GM18951 (cell line): ENCODE measurements at regions of chr10 and their contacts with region 1.

Region 1: DNA sequence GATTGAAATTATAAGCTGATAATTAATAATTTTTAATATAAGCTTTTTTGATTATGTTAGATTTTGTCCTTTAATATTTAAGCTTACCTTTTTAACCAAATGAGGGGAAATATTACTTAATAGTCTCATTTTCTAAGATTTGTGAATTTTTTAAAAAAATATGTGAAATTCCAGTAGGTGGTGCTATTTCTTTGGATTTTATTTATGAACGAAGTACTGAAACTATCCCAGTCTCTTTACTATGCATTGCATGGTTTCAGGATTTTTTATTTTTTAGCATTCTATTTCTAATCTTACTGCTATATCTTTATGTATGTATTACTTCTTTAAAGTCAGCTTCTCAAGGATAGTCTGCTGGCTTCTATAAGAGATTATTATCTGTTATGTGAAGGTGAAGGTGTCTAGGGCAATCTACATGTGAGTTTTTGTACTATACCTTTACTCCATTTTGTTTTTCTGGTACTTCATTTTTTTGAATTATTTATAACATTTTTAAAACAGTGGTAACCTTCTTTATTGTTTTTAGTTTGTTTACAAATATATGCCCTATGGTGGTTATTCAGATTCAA is 78.3 kb downstream of the ATRNL1 start:
- POLR2A ChIP-seq: no peak

Region 2: GRCh38 chr10:115082506-115082905 is 89.0 kb before region 1 on chr10:
- in situ Hi-C with region 1: no loop called
- POLR2A ChIP-seq: no peak

Region 3: DNA sequence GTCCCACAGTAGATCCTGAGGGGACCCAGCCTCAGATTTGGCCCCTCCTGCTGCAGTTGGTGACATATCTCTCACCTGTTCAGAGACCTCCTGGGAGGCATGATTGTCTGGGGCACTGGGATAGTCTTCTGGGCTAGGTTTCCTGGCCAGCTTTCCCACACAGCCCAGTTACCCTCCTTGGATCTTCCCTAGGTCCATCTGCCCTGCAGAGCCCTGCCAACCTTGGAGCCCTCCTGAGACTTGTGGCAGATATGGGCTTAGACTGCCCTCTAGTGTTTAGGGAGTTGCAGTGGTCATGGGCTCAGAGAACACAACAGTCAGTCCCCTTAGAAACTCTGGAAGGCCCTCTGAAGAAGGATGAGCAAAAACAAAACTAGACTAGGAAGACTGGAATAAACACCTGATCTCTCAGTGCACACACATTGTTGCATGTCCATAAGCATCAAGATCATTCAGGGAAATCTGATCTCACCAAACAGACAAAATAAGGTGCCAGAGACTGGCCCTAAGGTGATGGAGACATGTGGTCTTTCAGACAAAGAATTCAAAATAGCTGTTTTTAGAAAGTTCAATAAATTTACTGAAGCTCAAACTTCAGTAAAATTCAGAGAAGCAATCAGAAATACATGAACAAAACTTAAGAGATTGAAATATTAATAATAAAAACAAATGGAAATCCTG is 246.2 kb after region 1 on chr10:
- in situ Hi-C with region 1: loop called (anchors 25 kb)
- POLR2A ChIP-seq: no peak